Transverse colon (tissue), 4 donors: ENCODE measurements at regions of chr3 and their contacts with region 1.

Region 1: GRCh38 chr3:57078344-57078634 is 17.8 kb downstream of the SPATA12 start:
- DNase-seq: peak; percentile 66
- H3K4me3 ChIP-seq: peak overlapping the region; percentile 46 to 83 (median 76)
- H3K27ac ChIP-seq: peak overlapping the region; percentile 73 to 84 (median 78)
- H3K4me1 ChIP-seq: peaks cover 0 to 24% (median 11%) of the 10 kb centered on the region in 4 donors
- H3K27me3 ChIP-seq: no peaks in the 10 kb centered on the region
- CTCF ChIP-seq: no peak
- EP300 ChIP-seq: no peak
- POLR2A ChIP-seq: peak; percentile 46

Region 2: DNA sequence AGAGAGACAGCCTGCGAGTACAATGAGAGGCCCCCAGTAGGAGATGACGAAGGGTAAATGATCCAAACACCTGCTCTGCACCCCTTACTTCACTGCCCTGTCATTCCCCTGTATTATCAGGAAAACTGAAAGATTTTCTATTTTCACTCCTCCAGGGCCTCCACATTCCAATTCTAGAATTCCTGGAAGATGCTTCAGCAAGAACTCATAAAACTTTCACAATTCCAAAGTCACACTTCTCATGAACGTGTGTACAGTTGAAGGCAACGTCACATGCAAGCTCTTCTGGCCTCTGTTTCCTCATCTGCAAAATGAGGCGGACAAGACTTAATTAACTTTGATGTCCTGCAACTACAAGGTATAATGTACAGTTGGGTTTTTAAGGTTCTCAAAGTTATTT is 80.6 kb before region 1 on chr3:
- in situ Hi-C with region 1: no loop called
- intact Hi-C with region 1: loop called (anchors 5 kb)
- DNase-seq: no peak
- H3K4me3 ChIP-seq: no peak overlapping the region
- H3K27ac ChIP-seq: peak overlapping the region; percentile 59 to 76 (median 68)
- H3K4me1 ChIP-seq: peaks cover 6 to 28% (median 10%) of the 10 kb centered on the region in 4 donors
- H3K27me3 ChIP-seq: no peaks in the 10 kb centered on the region
- CTCF ChIP-seq: no peak
- EP300 ChIP-seq: no peak
- POLR2A ChIP-seq: no peak